Left ventricle myocardium superior (tissue), 1 donor: ENCODE measurements at regions of chr5 and their contacts with region 1.

Region 1: DNA sequence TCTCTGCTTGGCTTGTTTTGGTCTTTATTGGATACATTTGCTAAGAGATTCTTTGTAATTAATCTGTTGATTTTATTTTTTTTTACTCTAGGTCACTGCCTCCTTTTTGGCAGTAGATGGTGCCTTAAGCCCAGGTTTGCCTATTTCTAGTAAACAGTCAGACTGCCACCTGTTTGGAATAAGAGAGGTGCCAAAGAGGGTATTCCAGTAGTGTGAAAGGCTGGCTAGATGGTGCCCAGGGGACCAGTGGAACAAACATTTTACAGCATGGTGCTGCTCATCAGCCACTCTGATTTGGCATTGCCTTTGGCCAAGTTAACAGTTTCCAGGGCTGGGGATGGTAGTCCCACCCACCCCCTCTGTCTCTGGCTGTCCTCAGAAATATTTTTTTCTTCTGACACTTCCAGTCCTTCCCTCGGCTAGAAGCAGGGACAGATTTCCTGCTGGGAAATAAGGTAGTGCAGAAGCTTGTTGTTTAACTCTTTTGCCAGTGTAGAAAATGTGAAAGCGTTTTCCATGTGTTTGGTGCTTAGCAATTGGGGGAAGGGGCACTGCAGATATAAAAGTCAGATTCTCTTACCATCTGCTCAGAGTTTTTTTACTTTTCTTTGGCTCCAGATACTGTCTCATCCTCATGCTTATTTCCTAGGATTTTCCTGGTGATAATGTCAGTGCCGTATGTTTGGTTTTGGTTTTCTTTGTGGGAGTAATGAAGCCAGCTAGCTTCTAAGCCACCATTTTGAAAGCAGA is 36.6 kb upstream of the FBXL7 start:
- DNase-seq: no peak
- ATAC-seq: no peak

Region 2: DNA sequence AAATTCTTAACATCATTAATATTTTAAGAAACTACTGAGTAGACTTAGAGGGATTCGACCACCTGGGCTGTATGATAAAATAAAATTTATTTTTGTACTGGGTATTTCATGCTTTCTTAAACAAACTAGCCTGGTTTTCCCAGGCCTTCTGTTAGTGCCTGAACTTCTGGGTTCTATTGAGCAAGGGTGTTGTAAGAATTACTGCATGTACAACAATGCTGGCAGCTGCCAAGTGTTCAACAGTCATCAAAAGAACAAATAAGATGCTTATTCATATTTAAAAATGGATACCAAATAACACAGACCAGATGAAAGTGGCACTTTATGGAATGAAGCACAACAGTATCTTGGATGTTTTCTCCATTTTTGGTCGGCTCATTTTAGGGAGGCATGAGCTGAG is 86.6 kb before region 1 on chr5:
- intact Hi-C with region 1: no loop called
- DNase-seq: no peak
- ATAC-seq: peak; percentile 43

Region 3: DNA sequence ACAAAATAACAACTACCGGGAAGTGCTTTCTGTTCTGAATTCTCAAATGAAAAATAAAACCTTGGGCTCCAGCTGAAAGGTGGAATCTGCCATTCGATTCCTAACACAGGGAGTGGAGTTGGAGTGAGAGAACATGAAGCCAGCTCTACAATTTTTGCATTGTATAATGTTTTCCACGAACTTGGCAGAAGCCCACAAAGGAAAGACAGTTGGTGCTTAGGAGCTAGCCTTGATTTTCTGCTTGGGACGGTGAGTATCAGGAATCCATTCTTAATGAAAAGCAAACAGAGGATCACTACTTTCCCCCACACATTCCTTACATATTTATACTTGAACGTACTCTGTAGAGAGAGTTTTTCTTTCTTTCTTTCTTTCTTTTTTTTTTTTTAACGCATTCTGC is 37.6 kb before region 1 on chr5:
- intact Hi-C with region 1: no loop called
- DNase-seq: no peak
- ATAC-seq: no peak

Region 4: GRCh38 chr5:15550502-15551112 is 87.2 kb after region 1 on chr5:
- intact Hi-C with region 1: no loop called
- DNase-seq: no peak
- ATAC-seq: peak; percentile 64

Region 5: DNA sequence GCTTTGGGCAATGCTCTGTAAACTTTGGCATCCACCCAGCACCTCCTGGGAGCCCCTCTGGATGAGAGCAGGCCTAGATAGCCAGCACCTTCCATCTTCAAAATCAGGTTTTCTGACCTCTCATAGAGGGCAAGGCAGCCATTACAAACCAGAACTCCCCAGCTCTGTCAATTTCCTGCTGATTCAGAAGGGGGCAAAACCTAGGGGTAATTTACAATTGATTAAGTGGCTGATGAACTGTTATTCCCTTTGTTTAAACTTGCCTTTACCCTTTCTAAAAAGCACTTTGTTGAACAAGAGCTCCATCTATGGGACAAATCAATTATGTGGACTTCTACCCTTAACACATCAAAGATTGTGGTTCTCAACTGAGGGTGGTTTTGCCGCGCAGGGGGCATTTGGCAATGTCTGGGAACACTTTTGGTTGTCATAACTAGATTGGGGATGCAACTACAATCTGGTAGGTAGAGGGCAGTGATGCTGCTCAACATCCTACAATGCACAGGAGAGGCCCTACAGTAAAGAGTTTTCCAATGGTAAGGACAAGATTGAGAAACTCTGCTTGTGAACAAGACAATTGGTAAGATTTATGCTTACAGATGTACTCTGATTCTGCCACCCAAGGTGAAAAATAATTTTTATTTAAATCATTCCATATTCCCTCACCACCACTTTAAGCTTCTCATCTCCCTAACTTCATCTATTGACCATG is 532.1 kb after region 1 on chr5:
- intact Hi-C with region 1: loop called (anchors 10 kb)
- DNase-seq: no peak
- ATAC-seq: peak; percentile 70